ENCODE measurements at regions of chr9 and their contacts with region 1.

Region 1: DNA sequence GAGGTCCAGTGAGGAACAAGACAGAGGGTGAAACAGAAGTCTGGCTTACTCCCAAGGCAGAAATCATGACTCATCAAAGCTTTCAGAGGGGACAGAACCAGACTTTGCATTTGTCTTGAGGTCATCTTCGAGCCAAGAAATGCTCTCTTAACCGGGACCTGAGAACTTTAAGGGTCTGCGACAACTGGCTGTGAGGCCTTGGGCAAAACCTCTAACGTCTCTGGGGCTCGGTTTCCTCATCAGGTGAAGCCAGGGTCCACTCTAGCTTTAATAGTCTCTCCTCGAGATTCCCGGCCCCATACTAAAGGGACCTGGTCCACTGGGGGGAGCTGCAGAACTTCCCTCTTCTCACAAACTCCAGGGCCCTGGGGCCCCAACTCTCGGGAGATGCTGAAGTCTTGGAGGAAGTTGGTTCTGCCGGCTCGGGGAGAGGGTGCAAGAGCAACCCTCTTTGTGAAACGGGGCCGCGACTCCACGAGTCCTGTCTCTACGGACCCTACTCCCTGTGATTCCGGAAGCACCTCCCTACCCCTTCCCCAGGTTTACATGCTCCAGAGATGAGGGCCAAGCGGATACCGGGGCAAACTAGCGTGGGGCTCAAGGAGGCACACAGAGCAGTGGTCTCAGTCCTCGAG is 2.6 kb downstream of the GLIS3 start:
- DNase-seq: peak; percentile 70 to 84 (median 84)
- H3K4me3 ChIP-seq: peak overlapping the region; percentile 61 to 88 (median 78)
- H3K4me3 Mint-ChIP-seq: peak overlapping the region; percentile 99 to 100
- H3K27ac ChIP-seq: peak overlapping the region; percentile 84
- H3K27ac Mint-ChIP-seq: peak overlapping the region; percentile 87 to 96 (median 92)
- H3K4me1 ChIP-seq: peaks cover 46 to 56% of the 10 kb centered on the region in 2 donors
- H3K4me1 Mint-ChIP-seq: peaks cover 41% of the 10 kb centered on the region
- H3K27me3 ChIP-seq: peaks cover 27 to 37% of the 10 kb centered on the region in 2 donors
- H3K27me3 Mint-ChIP-seq: peaks cover 38 to 55% (median 54%) of the 10 kb centered on the region in 3 donors
- CTCF ChIP-seq: peak; percentile 29

Region 2: DNA sequence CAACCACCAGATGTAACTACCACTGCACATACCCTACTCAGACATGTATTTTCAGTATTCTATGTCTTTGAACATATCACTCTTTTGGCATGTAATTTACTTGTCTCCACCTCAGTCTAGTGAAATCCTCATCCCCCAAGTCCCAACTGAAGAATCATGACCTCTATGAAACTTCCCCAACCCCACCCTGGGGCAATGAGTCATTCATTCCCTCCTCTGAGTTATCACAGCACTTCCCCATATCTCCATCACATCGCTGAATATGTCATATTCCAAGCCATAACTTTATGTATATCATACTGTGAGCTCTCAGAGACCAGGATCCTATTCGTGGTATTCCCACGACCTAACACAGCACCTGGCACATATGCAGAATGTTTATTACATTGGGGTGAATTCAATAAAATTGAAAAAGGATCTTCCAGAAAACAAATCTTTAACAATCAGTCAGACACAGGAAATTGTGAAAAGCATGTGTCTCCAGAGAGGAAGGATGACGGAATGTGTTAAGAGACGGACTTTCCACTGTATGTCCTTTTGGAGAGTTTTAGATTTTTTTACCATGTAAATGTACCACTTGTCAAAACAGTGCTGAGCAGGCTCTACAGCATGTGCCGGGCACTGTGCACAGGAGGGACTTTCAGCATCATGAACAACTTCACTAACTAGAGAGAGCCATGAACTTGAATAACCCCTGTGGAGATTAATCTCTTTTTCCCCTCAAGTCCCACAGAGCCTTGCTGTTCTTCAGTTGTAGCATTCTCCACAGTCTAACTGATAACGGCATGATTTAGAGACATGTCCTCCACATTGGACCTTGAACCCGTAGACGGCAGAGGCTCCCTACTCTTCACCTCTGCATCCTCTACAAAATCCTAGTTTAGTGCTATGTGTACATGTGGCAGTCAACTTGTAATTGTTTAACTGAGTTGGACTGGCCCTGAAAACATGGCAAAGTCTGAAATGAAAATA is 210.9 kb before region 1 on chr9:
- intact Hi-C with region 1: loop called in 1 of 2 experiments (anchors 5 kb)
- DNase-seq: peak; percentile 47 to 89 (median 89)
- H3K4me3 ChIP-seq: no peak overlapping the region
- H3K4me3 Mint-ChIP-seq: peak overlapping the region; percentile 1 to 37
- H3K27ac ChIP-seq: peak overlapping the region in 1 of 2 donors; percentile 49
- H3K27ac Mint-ChIP-seq: peak overlapping the region in 5 of 7 donors; percentile 54 to 82 (median 75)
- H3K4me1 ChIP-seq: peaks cover 12 to 16% of the 10 kb centered on the region in 2 donors
- H3K4me1 Mint-ChIP-seq: peaks cover 19% of the 10 kb centered on the region
- H3K27me3 ChIP-seq: no peaks in the 10 kb centered on the region
- H3K27me3 Mint-ChIP-seq: peaks cover 0 to 4% (median 4%) of the 10 kb centered on the region in 3 donors
- CTCF ChIP-seq: no peak

Measured in CD14-positive monocyte (primary cell).